SK-N-SH (cell line): ENCODE measurements at regions of chr11 and their contacts with region 1.

Region 1: DNA sequence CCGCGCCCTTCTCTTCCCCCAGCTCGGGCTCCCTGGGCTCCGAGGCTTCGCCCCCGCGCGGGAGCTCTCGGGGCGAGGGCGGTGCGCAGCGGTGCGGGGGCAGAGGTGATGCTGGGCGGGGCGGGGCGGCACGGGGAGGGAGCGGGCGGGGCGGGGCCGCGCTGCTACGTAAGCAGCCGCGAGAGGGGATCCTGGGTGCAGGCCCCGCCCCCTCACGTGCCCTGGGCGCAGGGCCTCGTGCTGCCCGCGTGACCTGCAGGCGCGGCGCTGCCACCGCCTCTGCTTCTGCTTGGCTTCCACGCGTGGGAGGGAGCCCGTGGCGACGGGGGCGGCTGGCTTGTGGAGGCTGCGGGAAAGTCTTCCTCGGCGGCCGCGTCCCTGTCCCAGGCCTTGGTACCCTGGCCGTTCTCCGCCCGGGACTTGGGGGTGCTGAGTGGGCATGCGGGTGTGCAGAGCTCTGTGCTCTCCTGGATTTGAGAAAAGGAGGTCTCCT is 132.6 kb upstream of the HSD17B12 start:
- DNase-seq: peak; percentile 88
- H3K4me3 ChIP-seq: peak overlapping the region in 1 of 2 experiments; percentile 30; a peak in 1 of 4 replicates
- H3K27ac ChIP-seq: no peak overlapping the region
- H3K4me1 ChIP-seq: peaks cover 0 to 7% of the 10 kb centered on the region in 2 experiments; a peak in 1 of 4 replicates
- H3K27me3 ChIP-seq: no peaks in the 10 kb centered on the region
- CTCF ChIP-seq: no peak
- EP300 ChIP-seq: no peak
- RAD21 ChIP-seq: no peak

Region 2: DNA sequence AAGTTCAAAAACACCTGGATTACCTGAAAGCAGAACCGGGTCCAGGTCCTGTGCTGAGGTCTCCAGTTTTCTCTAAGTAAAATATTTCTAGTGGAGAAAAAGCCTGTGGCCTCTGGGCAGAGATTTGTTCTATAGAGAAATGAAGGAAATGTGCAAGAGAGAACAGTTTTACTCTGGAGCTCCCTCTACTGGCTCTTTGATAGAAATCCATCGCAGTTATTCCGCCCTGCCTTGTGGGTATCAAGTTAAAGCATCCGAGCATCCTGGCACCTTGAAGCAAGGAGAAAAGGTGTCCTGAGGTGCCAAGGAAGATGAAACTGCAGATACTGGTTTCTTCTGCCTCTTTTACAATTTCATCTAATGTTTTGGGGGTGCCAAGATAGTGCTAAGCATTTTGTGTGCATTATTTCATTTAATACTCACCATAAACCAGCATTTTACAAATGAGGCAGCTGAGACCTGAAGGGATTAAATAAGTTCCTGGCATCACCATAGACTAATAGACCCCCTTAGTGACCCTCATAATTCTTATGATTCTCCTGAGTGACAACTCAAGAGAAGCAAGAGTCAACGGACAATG is 19.6 kb after region 1 on chr11:
- CTCF ChIA-PET with region 1: interaction called, 17 read pairs
- POLR2A ChIA-PET with region 1: no interaction called
- DNase-seq: peak; percentile 64
- H3K4me3 ChIP-seq: no peak overlapping the region
- H3K27ac ChIP-seq: no peak overlapping the region
- H3K4me1 ChIP-seq: no peaks in the 10 kb centered on the region
- H3K27me3 ChIP-seq: peaks cover under 1% of the 10 kb centered on the region; the same call in 1 of the 2 replicates
- CTCF ChIP-seq: peak; percentile 76
- EP300 ChIP-seq: no peak
- RAD21 ChIP-seq: peak; percentile 59

Region 3: DNA sequence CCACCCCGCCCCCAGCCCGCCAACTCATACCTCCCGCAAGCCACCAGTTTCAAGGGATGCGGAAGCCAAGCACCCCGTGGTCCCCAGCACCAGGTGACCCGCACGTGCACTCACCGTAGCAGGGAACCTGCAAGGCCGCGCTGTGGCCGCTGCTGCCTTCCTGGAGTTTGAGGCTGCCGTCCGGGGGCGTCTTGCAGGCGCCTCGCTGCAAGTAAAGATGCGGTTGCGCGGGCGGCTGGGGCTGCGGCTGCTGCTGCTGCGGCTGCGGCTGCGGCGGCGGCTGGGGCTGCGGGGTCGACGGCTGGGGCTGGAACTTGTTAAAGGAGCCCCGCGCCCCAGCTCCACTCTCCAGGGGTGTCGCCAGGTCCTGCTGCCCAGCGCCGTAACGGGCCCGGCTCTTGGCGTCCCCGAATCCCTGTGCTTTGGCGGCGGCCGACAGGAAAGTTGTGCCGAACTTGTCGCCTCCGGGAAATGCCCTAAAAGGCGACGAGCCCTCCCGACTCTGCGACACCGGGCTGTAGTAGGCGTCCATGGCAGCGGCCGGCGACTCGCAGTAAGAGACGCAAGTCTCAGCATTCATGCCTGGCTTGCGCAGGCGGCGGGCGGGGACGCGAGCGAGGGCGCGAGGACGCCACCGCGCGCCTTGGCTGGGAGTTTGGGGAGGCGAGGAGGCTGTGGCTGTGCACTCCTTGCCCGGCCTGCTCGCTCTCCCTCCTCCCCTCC is 761.7 kb after region 1 on chr11 and contains the start of gene ALX4:
- CTCF ChIA-PET with region 1: no interaction called
- POLR2A ChIA-PET with region 1: no interaction called
- DNase-seq: peak; percentile 74
- H3K4me3 ChIP-seq: peak within 1 kb of the TSS; percentile 0 to 37; a peak in 3 of 4 replicates
- H3K27ac ChIP-seq: no peak within 1 kb of the TSS
- H3K4me1 ChIP-seq: peaks cover 0 to 7% of the 10 kb centered on the region in 2 experiments; a peak in 2 of 4 replicates
- H3K27me3 ChIP-seq: peaks cover 90% of the 10 kb centered on the region
- CTCF ChIP-seq: no peak
- EP300 ChIP-seq: no peak
- RAD21 ChIP-seq: no peak
- polyA plus RNA-seq, gene ALX4: under 0.01 TPM in 1 of 2 replicates, not detected in the other